HCT116 (cell line): ENCODE measurements at regions of chr19 and their contacts with region 1.

Region 1: DNA sequence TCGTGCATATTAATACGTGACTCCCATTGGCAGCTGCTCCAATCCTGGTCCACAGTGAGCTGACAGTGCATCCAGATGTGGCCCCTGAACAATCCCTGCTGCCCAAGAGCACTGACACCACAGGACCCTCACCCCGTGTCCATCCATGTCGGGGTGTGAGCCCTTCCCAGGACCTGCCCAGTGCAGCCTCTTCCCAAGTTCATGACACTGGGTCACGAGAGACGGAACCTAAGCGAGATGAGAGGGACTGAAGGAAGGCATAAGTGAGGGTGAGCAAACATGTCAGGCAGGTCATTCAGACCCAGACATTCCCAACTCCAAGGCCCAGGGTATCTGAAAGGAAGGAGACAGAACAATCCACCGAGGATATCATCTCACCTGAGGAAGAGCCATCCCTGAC is 3.5 kb downstream of the ZNF468 start:
- DNase-seq: no peak
- ATAC-seq: no peak
- H3K4me3 ChIP-seq: no peak overlapping the region
- H3K27ac ChIP-seq: no peak overlapping the region
- H3K4me1 ChIP-seq: peaks cover 0 to 5% of the 10 kb centered on the region in 2 experiments; a peak in 1 of 4 replicates
- H3K27me3 ChIP-seq: no peaks in the 10 kb centered on the region
- CTCF ChIP-seq: no peak
- POLR2A ChIP-seq: no peak
- RAD21 ChIP-seq: no peak

Region 2: GRCh38 chr19:52823676-52824075 is 30.2 kb before region 1 on chr19:
- CTCF ChIA-PET with region 1: no interaction called
- POLR2A ChIA-PET with region 1: no interaction called
- RAD21 ChIA-PET with region 1: no interaction called
- intact Hi-C with region 1: loop called (anchors 2 kb)
- DNase-seq: no peak
- ATAC-seq: no peak
- H3K4me3 ChIP-seq: no peak overlapping the region
- H3K27ac ChIP-seq: no peak overlapping the region
- H3K4me1 ChIP-seq: peaks cover 0 to 4% of the 10 kb centered on the region in 2 experiments; a peak in 2 of 4 replicates
- H3K27me3 ChIP-seq: no peaks in the 10 kb centered on the region
- CTCF ChIP-seq: no peak
- POLR2A ChIP-seq: no peak
- RAD21 ChIP-seq: no peak

Region 3: GRCh38 chr19:53003993-53004661 is 150.2 kb after region 1 on chr19:
- CTCF ChIA-PET with region 1: no interaction called
- POLR2A ChIA-PET with region 1: no interaction called
- RAD21 ChIA-PET with region 1: no interaction called
- intact Hi-C with region 1: no loop called
- DNase-seq: no peak
- ATAC-seq: no peak
- H3K4me3 ChIP-seq: no peak overlapping the region
- H3K27ac ChIP-seq: no peak overlapping the region
- H3K4me1 ChIP-seq: no peaks in the 10 kb centered on the region
- H3K27me3 ChIP-seq: no peaks in the 10 kb centered on the region
- CTCF ChIP-seq: no peak
- POLR2A ChIP-seq: no peak
- RAD21 ChIP-seq: no peak